CD8-positive, alpha-beta T cell (primary cell): ENCODE measurements at regions of chr17 and their contacts with region 1.

Region 1: DNA sequence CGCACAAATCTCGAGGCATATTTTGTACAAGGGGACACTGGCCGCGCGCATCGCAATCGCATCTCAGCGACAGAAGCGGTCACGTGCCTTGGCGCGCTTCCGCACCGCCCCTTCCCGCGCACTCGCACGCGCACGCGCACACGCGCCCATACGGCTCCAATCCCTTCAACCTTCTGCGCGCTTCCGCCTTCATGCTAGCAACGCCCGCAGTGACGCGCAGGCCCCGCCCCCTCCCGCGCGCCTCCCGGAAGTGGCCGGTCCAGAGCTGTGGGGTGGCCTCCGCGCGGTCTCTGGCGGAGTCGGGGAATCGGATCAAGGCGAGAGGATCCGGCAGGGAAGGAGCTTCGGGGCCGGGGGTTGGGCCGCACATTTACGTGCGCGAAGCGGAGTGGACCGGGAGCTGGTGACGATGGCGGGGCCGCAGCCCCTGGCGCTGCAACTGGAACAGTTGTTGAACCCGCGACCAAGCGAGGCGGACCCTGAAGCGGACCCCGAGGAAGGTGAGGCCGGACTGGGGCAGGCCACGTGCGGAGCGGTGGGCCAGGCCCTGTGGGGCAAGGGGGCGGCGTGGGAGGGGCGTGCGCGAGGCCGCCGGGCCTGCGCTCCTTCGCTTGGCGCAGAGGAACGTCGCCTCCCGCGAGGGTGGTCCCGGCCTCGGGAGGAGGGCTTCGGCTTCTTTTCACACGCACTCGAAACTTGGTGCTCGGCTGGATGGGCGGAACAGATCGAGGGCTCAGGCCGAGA is at the start of gene AATF:
- DNase-seq: peak; percentile 82 to 99 (median 96)
- ATAC-seq: peak; percentile 91
- H3K4me3 ChIP-seq: peak within 1 kb of the TSS; percentile 81 to 91
- H3K4me3 Mint-ChIP-seq: peak within 1 kb of the TSS; percentile 98
- H3K27ac ChIP-seq: peak within 1 kb of the TSS; percentile 88 to 90
- H3K27ac Mint-ChIP-seq: peak within 1 kb of the TSS; percentile 98
- H3K4me1 ChIP-seq: peaks cover 26% of the 10 kb centered on the region
- H3K4me1 Mint-ChIP-seq: peaks cover 60% of the 10 kb centered on the region
- H3K27me3 ChIP-seq: peaks cover 28 to 34% of the 10 kb centered on the region in 2 experiments
- H3K27me3 Mint-ChIP-seq: peaks cover 31% of the 10 kb centered on the region
- CTCF ChIP-seq: no peak
- total RNA-seq, gene AATF: 49.5 to 51.5 TPM

Region 2: DNA sequence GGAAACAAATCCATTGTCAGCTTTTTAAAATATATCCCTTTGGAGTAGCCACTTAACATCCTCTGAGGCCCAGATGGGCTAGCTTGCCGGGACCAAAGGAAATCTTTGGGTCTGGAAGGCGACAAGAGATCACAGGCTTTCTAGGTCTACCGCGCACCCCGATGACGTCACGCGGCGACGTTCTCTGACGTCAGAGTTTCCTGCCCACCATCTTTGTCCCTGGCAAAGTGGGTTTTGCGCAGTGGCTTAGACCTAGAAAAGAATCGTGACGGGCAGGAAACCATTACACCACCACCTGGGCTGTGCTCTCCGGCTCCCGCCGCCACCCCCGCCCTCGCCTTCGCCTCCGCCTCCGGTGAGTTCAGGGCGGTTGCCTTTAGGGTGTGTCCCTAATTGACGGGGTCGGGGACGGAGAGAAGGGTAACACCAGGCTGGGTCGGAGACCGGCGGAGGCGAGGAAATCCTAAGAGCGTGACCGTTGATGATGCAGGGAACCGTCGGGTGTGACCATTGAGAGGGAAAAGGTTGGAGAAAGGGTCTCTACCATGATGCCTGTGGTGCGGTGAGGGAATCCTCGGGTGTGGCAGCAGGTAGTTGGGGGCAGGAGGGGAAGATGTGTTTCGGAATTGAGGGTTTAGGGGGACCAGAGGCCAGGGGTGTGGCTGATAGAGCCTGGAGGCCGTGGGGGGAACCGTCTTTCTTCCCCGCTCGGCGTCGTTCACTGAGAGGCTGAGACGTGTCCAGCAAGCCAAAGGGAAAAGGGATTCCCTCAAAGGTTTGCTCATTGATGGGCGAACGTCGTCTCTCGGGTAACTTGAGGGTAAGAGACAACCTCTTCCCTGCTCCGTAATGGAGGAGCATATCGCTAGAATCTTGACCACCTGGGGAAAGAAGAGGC is 1361.6 kb before region 1 on chr17 and contains the start of gene AP2B1:
- CTCF ChIA-PET with region 1: no interaction called
- POLR2A ChIA-PET with region 1: no interaction called
- intact Hi-C with region 1: loop called in 1 of 2 experiments (anchors 10 kb)
- DNase-seq: peak; percentile 96 to 100 (median 97)
- ATAC-seq: peak; percentile 98
- H3K4me3 ChIP-seq: peak within 1 kb of the TSS; percentile 84 to 92
- H3K4me3 Mint-ChIP-seq: peak within 1 kb of the TSS; percentile 99
- H3K27ac ChIP-seq: peak within 1 kb of the TSS; percentile 86 to 93
- H3K27ac Mint-ChIP-seq: peak within 1 kb of the TSS; percentile 98
- H3K4me1 ChIP-seq: peaks cover 21% of the 10 kb centered on the region
- H3K4me1 Mint-ChIP-seq: peaks cover 38% of the 10 kb centered on the region
- H3K27me3 ChIP-seq: no peaks in the 10 kb centered on the region
- H3K27me3 Mint-ChIP-seq: no peaks in the 10 kb centered on the region
- CTCF ChIP-seq: no peak
- total RNA-seq, gene AP2B1: 58.7 to 65.7 TPM

Region 3: DNA sequence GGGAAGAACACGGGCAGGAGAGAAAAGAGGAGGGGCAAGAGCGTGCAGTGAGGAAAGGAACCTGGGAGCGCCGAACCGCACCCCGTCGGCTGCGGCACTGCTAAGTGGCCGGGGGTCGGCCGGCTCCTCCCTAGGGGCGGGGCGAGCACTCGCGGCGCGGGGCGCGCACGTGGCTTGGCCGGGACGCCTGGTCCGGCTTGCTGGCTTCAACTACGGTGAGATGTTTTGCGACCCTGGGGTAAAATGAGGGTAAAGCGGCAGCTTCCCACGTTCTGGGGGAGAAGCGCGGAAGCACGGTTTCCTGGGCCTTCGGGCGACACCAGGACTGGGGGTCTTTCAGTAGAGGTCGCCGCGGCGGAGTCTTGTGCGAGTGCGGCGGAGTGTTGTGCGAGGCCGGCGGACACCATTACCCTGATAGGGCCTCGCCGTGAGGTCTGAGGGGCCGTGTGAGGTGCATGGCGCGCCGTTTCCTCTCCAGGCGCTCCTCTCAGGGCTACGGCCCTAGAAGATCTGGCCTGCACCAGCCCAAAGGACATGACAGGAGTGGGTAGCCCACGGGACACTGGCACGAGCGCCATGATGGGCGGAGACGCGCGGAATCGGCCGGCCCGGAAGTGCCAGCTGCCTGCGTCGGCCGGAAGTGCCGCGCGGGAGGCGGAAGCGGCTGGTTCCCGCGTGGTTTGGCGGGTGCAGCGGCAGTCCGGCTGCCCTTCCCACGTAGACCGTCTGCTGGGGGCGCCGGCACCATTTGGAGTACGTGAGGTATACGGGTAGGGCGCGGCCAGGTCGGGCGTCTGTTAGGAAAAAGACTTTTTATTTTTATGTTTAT is 413.8 kb before region 1 on chr17 and contains the starts of genes MYO19 and PIGW:
- CTCF ChIA-PET with region 1: no interaction called
- POLR2A ChIA-PET with region 1: interaction called, 3 read pairs
- intact Hi-C with region 1: loop called in 1 of 2 experiments (anchors 5 kb)
- DNase-seq: peak; percentile 66 to 93 (median 83)
- ATAC-seq: peak; percentile 73
- H3K4me3 ChIP-seq: peak within 1 kb of the TSS; percentile 69 to 98
- H3K4me3 Mint-ChIP-seq: peak within 1 kb of the TSS; percentile 98
- H3K27ac ChIP-seq: peak within 1 kb of the TSS; percentile 93 to 98
- H3K27ac Mint-ChIP-seq: peak within 1 kb of the TSS; percentile 97
- H3K4me1 ChIP-seq: peaks cover 11% of the 10 kb centered on the region
- H3K4me1 Mint-ChIP-seq: peaks cover 16% of the 10 kb centered on the region
- H3K27me3 ChIP-seq: no peaks in the 10 kb centered on the region
- H3K27me3 Mint-ChIP-seq: no peaks in the 10 kb centered on the region
- CTCF ChIP-seq: no peak
- total RNA-seq, gene MYO19: 55.9 to 57.7 TPM
- total RNA-seq, gene PIGW: 2.3 to 3.4 TPM

Region 4: DNA sequence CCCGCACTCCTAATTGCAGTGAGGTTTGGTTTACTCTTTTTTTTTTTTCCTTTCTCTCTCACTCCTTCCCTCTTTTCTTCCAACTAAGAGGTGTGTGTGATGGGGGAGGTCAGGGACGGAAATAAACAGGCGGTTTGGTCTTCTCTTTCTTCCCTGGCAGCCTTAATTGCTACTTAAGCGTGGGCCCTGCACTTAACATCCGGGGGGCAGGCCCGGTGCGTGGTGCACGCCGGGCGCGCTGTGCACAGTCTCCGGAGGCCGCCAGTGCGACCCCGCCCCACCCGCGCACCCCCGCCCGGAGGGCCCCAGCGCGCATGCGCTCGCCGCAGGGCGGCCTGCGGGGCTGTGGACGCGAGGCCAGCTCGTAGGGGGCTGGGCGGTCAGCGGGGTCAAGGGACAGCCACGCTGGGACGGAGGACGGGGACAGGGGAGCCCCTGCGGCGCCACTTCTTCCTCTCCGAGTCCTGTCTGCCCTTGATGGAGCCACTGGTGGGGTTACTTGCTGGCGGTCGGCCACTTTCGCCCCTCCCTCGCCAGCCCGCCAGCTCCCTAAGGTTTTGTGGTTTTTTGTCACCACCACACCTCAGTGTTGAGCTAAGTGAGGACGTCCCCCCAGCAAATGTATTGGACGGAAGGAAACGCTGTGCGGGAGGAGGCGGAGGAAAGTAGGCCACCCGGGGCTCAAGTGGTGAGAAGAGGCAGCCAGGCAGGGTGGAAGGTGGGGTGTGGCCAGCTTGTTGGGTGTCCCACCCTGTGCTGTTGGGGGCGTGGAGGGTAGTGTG is 226.6 kb before region 1 on chr17:
- CTCF ChIA-PET with region 1: no interaction called
- POLR2A ChIA-PET with region 1: interaction called, 9 read pairs
- intact Hi-C with region 1: loop called (anchors 5 to 10 kb)
- DNase-seq: peak; percentile 53 to 91 (median 77)
- ATAC-seq: peak; percentile 95
- H3K4me3 ChIP-seq: peak overlapping the region; percentile 49 to 61
- H3K4me3 Mint-ChIP-seq: peak overlapping the region; percentile 84
- H3K27ac ChIP-seq: peak overlapping the region; percentile 66 to 82
- H3K27ac Mint-ChIP-seq: peak overlapping the region; percentile 99
- H3K4me1 ChIP-seq: peaks cover 42% of the 10 kb centered on the region
- H3K4me1 Mint-ChIP-seq: peaks cover 60% of the 10 kb centered on the region
- H3K27me3 ChIP-seq: no peaks in the 10 kb centered on the region
- H3K27me3 Mint-ChIP-seq: no peaks in the 10 kb centered on the region
- CTCF ChIP-seq: no peak

Region 5: DNA sequence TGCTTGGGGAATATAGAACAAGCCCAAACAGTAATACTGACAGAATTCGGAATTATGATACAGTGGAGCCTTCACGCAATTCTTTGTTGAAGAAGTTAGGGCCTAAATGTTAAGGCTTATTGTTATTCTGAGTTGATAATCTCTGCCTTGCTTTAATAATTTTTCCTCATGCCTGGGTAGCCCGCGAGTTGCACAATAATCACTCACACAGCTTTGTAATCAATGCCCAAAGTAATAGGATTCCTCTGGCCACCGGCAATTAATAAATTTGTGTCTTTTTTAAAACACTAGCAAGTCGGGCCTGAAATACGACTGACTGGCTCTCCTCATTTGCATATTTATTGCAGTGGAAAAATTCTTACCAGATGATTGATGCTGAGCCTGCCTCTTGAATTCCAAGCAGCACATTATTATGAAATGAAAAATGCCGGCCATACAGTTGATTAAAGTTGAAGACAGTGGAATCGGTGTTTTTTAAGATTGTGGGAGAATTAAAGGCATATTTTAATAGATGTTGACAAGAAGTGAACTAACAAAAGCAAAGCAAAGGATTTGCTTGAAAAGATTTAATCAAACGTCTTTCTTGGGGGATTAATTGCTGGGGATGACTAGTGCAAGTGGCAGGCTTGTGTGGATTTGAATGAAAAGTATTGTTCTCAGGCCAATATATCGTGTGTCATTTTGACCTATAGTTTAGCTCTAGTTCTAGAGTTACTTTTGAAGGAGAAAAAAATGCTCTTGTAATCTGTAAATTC is 30.1 kb after region 1 on chr17:
- CTCF ChIA-PET with region 1: no interaction called
- POLR2A ChIA-PET with region 1: no interaction called
- intact Hi-C with region 1: no loop called
- DNase-seq: no peak
- ATAC-seq: no peak
- H3K4me3 ChIP-seq: no peak overlapping the region
- H3K4me3 Mint-ChIP-seq: no peak overlapping the region
- H3K27ac ChIP-seq: no peak overlapping the region
- H3K27ac Mint-ChIP-seq: peak overlapping the region; percentile 2
- H3K4me1 ChIP-seq: no peaks in the 10 kb centered on the region
- H3K4me1 Mint-ChIP-seq: peaks cover 68% of the 10 kb centered on the region
- H3K27me3 ChIP-seq: no peaks in the 10 kb centered on the region
- H3K27me3 Mint-ChIP-seq: no peaks in the 10 kb centered on the region
- CTCF ChIP-seq: no peak

Region 6: DNA sequence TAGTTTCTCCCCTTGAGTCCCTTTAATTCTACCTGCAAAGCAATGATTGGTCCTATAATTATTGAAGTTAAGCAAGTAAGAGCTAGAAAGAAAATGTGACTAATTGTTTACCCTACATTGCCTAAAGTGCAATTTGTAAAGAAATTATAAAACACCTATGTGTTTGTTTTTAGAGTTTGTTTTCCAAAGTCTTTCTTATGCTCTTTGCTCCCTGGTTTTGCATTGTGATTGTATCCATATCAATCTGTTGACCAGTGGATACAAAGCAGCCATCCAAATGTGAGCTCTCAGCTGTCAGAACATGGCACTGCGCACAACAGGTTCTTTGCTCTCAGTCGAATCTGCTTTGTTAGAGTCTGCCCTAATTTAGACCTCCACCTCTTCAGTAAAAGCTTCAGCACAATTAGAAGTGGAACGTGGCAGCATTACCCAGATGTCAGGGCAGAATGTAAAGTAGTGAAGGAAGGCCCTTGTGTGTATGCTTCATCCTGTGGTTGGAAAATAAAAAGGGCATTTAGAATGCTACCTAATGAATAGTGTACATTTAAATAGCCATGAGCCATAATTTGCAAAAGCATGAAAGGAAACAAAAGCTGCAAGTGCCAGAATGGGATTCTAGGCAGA is 70.3 kb after region 1 on chr17:
- CTCF ChIA-PET with region 1: no interaction called
- POLR2A ChIA-PET with region 1: no interaction called
- intact Hi-C with region 1: no loop called
- DNase-seq: no peak
- ATAC-seq: no peak
- H3K4me3 ChIP-seq: no peak overlapping the region
- H3K4me3 Mint-ChIP-seq: no peak overlapping the region
- H3K27ac ChIP-seq: no peak overlapping the region
- H3K27ac Mint-ChIP-seq: no peak overlapping the region
- H3K4me1 ChIP-seq: no peaks in the 10 kb centered on the region
- H3K4me1 Mint-ChIP-seq: no peaks in the 10 kb centered on the region
- H3K27me3 ChIP-seq: no peaks in the 10 kb centered on the region
- H3K27me3 Mint-ChIP-seq: no peaks in the 10 kb centered on the region
- CTCF ChIP-seq: no peak

Region 7: DNA sequence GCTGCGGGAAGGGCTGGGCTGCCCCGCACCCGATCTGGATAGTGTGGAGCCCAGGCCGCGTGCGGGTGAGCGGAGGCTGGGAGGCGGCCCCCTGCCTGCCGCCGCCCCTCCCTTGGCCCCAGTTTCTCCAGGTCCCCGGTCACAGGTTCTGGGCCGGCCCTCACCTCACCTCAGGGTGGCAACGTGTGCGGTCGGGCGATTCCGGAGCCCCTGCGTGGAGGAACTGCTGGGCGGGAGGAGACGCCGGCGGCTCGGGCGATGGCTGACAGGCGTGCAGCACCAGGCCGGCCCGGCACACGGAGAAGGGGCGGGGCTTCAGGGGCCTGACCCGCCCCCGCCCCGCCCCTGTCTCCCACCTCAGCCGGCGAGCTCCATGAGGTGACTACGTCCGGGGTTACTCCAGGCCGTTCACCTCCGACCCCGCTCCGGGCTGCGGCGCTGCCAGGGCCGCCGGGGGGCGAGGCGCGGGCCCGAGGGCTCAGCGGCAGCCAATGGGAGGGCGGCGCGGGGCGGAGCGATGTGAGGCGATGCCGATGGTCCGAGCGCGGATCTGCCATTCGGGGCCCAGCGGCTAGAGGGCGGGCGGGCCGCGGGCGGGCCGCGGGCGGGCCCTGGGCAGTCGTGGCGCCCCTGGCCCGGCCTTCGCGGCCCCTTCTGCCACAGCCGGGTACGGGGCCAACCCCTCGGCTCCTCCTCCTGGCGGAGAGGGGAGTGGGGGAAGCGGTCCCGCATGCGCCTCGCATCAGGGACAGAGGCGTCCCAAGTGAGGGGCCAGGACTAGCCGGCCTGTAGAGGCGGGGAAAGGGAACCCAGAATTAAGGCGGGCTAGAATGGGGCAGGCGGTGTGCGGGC is 410.2 kb after region 1 on chr17:
- CTCF ChIA-PET with region 1: no interaction called
- POLR2A ChIA-PET with region 1: no interaction called
- intact Hi-C with region 1: loop called in 1 of 2 experiments (anchors 2 kb)
- DNase-seq: peak; percentile 77 to 97 (median 88)
- ATAC-seq: peak; percentile 95
- H3K4me3 ChIP-seq: peak overlapping the region; percentile 78 to 98
- H3K4me3 Mint-ChIP-seq: peak overlapping the region; percentile 87
- H3K27ac ChIP-seq: peak overlapping the region; percentile 66 to 82
- H3K27ac Mint-ChIP-seq: peak overlapping the region; percentile 87
- H3K4me1 ChIP-seq: peaks cover 16% of the 10 kb centered on the region
- H3K4me1 Mint-ChIP-seq: peaks cover 18% of the 10 kb centered on the region
- H3K27me3 ChIP-seq: no peaks in the 10 kb centered on the region
- H3K27me3 Mint-ChIP-seq: no peaks in the 10 kb centered on the region
- CTCF ChIP-seq: no peak